CD14-positive monocyte (primary cell): ENCODE measurements at regions of chr13 and their contacts with region 1.

Region 1: GRCh38 chr13:99200432-99201167 is at the start of gene UBAC2:
- DNase-seq: peak; percentile 94 to 97 (median 96)
- H3K4me3 ChIP-seq: peak within 1 kb of the TSS; percentile 69 to 97 (median 95)
- H3K4me3 Mint-ChIP-seq: peak within 1 kb of the TSS; percentile 91 to 100
- H3K27ac ChIP-seq: peak within 1 kb of the TSS; percentile 96 to 99
- H3K27ac Mint-ChIP-seq: peak within 1 kb of the TSS; percentile 94 to 99 (median 98)
- H3K4me1 ChIP-seq: peaks cover 32 to 44% of the 10 kb centered on the region in 2 donors
- H3K4me1 Mint-ChIP-seq: peaks cover 43% of the 10 kb centered on the region
- H3K27me3 ChIP-seq: no peaks in the 10 kb centered on the region
- H3K27me3 Mint-ChIP-seq: peaks cover 0 to 3% (median 2%) of the 10 kb centered on the region in 3 donors
- CTCF ChIP-seq: no peak
- polyA plus RNA-seq, gene UBAC2: 59.6 to 113 (median 96.7) TPM

Region 2: GRCh38 chr13:99258210-99258860 is 57.7 kb after region 1 on chr13 and contains the start of gene GPR18:
- intact Hi-C with region 1: loop called in 1 of 2 experiments (anchors 5 kb)
- DNase-seq: peak; percentile 44 to 64 (median 52)
- H3K4me3 ChIP-seq: peak within 1 kb of the TSS; percentile 12 to 58 (median 44)
- H3K4me3 Mint-ChIP-seq: peak within 1 kb of the TSS; percentile 69 to 85
- H3K27ac ChIP-seq: peak within 1 kb of the TSS; percentile 71 to 85
- H3K27ac Mint-ChIP-seq: peak within 1 kb of the TSS; percentile 88 to 93 (median 90)
- H3K4me1 ChIP-seq: peaks cover 50 to 71% of the 10 kb centered on the region in 2 donors
- H3K4me1 Mint-ChIP-seq: peaks cover 58% of the 10 kb centered on the region
- H3K27me3 ChIP-seq: no peaks in the 10 kb centered on the region
- H3K27me3 Mint-ChIP-seq: no peaks in the 10 kb centered on the region
- CTCF ChIP-seq: no peak
- polyA plus RNA-seq, gene GPR18: 1.7 to 3.8 (median 2.2) TPM